MCF 10A (cell line): ENCODE measurements at regions of chr11 and their contacts with region 1.

Region 1: DNA sequence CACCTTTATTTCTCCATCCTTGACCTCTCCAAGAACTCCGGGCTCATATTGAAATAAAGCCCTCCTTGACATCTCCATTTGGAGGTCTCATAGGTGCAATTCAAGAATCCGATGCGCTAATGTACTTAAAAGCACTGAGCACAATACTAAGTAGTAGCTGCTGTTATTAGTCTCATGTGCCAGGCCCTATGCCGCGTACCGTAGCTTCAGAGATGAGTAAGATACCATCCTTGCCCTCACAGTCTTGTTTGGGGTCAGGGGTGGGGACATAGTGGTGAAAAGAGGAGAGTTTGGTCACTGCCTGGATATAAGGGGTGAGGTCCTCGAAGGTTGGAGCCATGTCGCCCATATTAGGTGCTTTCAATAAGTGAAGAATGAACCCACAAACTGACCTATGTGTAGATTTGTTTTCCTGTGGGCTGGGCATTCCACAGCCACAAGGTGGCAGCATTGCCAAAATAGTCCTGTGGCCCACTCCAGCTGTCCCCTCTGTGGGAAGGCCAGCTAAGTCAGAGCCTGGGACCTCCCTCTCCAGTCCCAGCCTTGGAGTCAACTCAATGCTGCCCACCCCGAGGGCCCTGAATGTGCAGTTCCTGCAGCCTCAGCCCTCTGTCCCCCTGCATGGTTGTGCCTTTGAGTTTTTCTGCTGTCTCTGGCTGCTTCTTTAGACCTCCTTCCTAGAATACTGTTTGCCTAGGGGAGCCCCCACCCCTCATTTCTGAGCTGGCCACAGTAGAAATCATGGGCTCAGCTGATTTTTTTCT is 6.5 kb downstream of the DCPS start:
- DNase-seq: peak; percentile 78
- H3K4me3 Mint-ChIP-seq: no peak overlapping the region
- H3K27ac Mint-ChIP-seq: no peak overlapping the region
- H3K4me1 Mint-ChIP-seq: peaks cover 5% of the 10 kb centered on the region
- H3K27me3 Mint-ChIP-seq: no peaks in the 10 kb centered on the region
- CTCF ChIP-seq: peak; percentile 82

Region 2: DNA sequence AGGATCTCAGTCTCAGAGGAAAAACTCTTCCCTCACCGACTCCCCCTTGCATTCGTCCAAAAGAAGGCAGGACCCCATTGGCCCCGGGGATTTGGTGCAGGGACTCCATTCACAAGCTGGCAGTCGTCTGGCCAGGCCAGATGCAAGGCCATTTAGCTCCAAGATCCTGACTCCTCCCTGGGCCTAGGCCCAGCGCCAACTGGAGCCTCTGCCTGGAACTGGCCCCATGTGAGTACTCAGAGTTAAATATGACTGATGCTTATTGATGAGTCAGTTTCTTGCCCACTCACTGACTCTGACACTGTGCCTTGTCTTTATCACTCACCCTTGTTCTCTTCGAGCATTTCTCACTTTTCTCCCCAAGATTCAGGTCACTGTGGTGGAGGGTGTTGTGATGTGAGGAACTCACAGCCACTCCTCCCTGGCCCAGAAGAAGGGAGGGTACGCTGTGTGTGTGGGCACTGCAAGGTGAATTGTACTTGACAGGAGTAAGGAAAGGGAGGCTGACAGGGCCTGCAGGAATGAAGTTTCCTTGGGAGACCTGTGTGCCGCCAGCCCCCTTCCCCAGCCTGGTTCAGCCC is 21.8 kb after region 1 on chr11:
- CTCF ChIA-PET with region 1: interaction called, 16 read pairs
- POLR2A ChIA-PET with region 1: no interaction called
- intact Hi-C with region 1: no loop called
- DNase-seq: peak; percentile 94
- H3K4me3 Mint-ChIP-seq: no peak overlapping the region
- H3K27ac Mint-ChIP-seq: peak overlapping the region; percentile 21
- H3K4me1 Mint-ChIP-seq: peaks cover 21% of the 10 kb centered on the region
- H3K27me3 Mint-ChIP-seq: no peaks in the 10 kb centered on the region
- CTCF ChIP-seq: no peak

Region 3: GRCh38 chr11:126386031-126386728 is 75.8 kb after region 1 on chr11:
- CTCF ChIA-PET with region 1: interaction called, 12 read pairs
- POLR2A ChIA-PET with region 1: no interaction called
- intact Hi-C with region 1: no loop called
- DNase-seq: no peak
- H3K4me3 Mint-ChIP-seq: no peak overlapping the region
- H3K27ac Mint-ChIP-seq: peak overlapping the region; percentile 42
- H3K4me1 Mint-ChIP-seq: peaks cover 28% of the 10 kb centered on the region
- H3K27me3 Mint-ChIP-seq: no peaks in the 10 kb centered on the region
- CTCF ChIP-seq: no peak

Region 4: DNA sequence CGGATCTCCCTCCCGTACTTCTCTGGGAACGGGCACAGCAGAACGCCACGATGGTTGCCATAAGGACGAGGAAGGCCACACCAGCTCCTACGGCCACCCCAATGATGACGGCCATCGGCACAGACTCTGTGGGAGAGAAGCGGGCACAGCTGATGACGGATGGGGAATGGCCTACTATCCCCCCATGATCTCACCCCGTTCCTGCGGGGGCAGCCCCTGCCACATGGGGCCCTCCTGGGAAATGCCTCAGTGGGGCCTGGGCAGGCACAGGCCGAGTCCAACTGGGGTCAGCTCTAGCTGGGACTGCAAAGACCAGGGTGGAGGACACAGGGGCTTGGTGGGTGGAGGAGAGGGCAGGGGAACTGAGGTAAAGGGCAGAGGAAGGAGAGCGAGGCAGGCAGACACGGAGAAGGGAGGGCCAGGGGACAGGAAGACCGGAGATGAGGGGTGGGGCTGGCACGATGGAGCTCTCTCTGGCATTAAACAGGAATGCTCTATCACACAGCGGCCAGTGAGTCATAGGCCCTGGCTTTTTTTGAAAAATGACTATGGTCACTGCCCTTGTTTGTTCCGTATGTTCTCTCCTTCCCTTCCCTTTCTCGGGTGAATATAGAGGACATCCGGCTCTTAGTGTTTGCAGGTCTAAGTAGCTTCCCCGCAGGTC is 121.1 kb after region 1 on chr11:
- CTCF ChIA-PET with region 1: interaction called, 30 read pairs
- POLR2A ChIA-PET with region 1: no interaction called
- intact Hi-C with region 1: loop called (anchors 2 kb)
- DNase-seq: peak; percentile 79
- H3K4me3 Mint-ChIP-seq: no peak overlapping the region
- H3K27ac Mint-ChIP-seq: peak overlapping the region; percentile 98
- H3K4me1 Mint-ChIP-seq: peaks cover 14% of the 10 kb centered on the region
- H3K27me3 Mint-ChIP-seq: no peaks in the 10 kb centered on the region
- CTCF ChIP-seq: no peak

Region 5: DNA sequence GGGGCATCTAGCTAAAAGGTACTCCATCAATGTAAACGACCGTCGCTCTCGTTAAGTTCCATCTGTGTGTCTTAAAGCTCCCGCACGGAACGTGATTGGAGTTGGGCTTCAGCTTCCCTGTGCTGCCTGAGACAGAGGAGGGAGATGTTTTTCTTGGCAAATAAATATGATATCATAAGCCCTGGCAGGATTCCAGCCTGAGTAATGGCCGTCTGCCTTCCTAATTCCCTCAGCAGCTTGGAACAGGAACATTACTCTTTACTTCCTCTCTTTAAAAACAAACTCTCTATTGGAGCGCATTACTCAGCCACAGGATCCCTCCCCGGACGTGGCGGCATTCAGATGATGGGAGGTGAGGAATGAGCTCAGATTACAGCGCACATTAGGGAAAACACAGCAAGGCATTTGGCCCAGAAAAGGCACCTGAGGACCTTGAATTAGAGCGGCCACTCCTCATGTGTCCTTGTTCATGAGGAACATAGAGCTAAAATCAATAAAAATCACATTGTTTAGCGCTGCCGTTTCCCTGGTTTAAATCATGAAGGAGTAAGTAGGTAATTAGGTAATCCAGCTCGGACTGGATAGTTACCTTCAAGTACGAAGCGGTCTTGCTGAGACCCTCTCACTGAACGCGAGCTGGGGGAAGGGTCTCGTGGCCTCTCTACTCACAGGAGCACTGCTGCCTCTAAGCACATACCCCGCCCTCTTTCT is 275.5 kb after region 1 on chr11:
- CTCF ChIA-PET with region 1: interaction called, 5 read pairs
- POLR2A ChIA-PET with region 1: no interaction called
- intact Hi-C with region 1: loop called (anchors 10 kb)
- DNase-seq: peak; percentile 97
- H3K4me3 Mint-ChIP-seq: no peak overlapping the region
- H3K27ac Mint-ChIP-seq: no peak overlapping the region
- H3K4me1 Mint-ChIP-seq: no peaks in the 10 kb centered on the region
- H3K27me3 Mint-ChIP-seq: no peaks in the 10 kb centered on the region
- CTCF ChIP-seq: no peak

Region 6: DNA sequence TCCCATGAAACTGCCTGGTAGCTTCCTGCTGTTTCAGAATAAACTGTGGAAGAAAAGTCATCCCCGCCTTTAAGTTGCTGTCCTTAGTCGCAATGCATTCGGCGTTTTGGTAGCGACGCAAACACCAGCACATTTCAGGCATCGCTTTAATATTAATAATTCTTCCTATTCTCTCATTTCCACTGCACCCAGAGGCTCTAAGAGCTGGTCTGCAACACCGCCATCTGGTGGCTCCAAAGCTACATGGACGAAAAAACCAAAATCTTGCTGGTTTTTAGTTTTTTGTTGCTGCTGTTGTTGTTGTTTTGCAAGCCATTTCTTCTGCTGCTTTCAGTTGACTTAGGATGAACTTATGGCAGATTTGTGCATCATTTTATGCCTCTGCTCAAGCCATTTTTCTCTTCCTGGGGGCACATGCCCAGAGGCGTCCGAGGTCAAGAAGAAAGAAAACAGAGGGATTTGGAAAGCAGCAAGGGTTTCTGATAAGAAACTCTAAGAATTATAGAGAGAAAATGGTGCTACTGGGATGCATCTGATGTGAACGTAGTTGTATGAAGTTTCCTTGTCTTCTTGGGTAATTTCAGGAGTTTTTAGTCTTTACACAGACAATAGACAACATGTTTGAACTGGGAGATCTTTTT is 1035.5 kb after region 1 on chr11:
- CTCF ChIA-PET with region 1: interaction called, 4 read pairs
- POLR2A ChIA-PET with region 1: no interaction called
- intact Hi-C with region 1: loop called (anchors 10 kb)
- DNase-seq: peak; percentile 58
- H3K4me3 Mint-ChIP-seq: no peak overlapping the region
- H3K27ac Mint-ChIP-seq: no peak overlapping the region
- H3K4me1 Mint-ChIP-seq: no peaks in the 10 kb centered on the region
- H3K27me3 Mint-ChIP-seq: no peaks in the 10 kb centered on the region
- CTCF ChIP-seq: peak; percentile 72